ENCODE measurements at regions of chrX and their contacts with region 1.

Region 1: DNA sequence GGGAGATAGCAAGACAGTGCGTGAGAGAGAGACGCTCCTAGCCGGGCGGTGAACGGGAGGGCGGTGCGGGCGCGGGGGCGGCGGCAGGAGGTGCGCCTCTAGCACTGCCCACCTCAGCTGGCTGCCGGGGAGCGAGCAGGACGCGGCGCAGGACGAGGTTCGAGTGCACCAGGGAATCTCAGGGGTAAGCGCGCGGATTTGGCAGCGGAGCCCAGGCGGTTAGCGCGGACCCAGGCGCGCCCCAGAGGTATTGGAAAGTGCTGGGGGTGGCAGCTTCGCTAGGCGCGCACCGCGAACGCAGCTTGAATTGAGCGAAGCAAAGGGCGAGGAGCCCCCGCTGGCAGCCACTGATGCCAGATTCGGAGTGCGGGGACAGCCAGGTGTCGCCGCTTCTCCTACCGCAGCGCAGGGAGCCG is 24.2 kb downstream of the ARHGAP36 start:
- DNase-seq: no peak
- H3K4me3 ChIP-seq: no peak overlapping the region
- H3K27ac ChIP-seq: no peak overlapping the region
- H3K4me1 ChIP-seq: no peaks in the 10 kb centered on the region
- H3K27me3 ChIP-seq: peaks cover 87% of the 10 kb centered on the region
- CTCF ChIP-seq: no peak

Region 2: DNA sequence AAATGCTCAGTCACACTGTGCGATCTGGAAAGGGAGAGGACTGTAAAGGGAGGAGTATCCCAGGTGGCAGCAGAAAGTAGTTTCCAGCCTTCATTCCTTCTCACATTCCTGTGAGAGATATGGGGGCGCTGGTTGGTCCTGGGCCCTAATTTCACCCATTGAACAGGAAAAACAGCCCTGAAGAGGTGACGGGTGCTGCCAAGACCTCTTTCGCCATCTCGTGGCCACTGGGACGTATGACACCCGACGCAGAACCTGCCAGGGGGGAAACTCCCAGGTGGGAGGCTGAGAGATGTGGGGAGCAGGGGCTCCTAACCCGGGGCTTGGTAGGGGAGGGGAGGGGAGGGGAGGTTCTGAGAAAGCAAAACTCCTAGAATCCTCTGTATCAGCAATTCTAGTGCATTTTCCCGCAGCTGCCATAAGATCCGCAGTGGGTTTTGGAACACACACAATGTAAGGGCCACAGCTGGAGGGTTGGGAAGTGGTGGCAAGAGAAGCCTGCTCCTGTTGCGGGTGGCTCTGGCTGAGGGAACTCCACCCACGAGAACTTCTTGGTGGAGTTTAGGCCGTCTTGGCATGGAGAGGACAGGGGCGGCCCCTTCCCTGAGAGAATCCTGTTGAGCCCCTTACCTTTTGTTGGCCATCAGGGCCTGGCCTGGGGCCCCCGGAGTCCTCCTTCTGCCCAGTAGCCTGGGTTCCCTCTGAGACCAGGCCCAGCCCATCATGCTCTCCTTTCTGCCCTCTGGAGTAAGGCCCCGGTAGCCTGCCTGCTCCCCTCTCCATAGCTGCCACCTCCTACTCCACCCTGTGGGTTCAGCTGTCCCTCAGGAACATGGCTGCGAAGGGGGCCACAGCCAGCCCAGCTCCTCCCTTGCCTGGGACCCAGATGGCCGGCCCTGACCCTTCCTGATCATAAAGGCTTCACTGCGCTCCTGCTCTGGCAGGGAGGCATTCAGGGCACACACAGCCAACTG is 595.6 kb after region 1 on chrX:
- CTCF ChIA-PET with region 1: no interaction called
- POLR2A ChIA-PET with region 1: interaction called, 13 read pairs
- intact Hi-C with region 1: no loop called
- DNase-seq: peak; percentile 47
- H3K4me3 ChIP-seq: no peak overlapping the region
- H3K27ac ChIP-seq: no peak overlapping the region
- H3K4me1 ChIP-seq: no peaks in the 10 kb centered on the region
- H3K27me3 ChIP-seq: no peaks in the 10 kb centered on the region
- CTCF ChIP-seq: peak; percentile 80

Measured in A673 (cell line).